HEK293 (cell line): ENCODE measurements at regions of chr10 and their contacts with region 1.

Region 1: GRCh38 chr10:13051126-13051694 is 48.8 kb upstream of the OPTN start:
- H3K4me3 ChIP-seq: no peak overlapping the region
- H3K27ac ChIP-seq: no peak overlapping the region
- H3K4me1 ChIP-seq: no peaks in the 10 kb centered on the region
- CTCF ChIP-seq: no peak

Region 2: GRCh38 chr10:13016426-13016825 is 34.8 kb before region 1 on chr10:
- CTCF ChIA-PET with region 1: interaction called, 10 read pairs
- POLR2A ChIA-PET with region 1: no interaction called
- H3K4me3 ChIP-seq: no peak overlapping the region
- H3K27ac ChIP-seq: no peak overlapping the region
- H3K4me1 ChIP-seq: no peaks in the 10 kb centered on the region
- CTCF ChIP-seq: no peak